ENCODE measurements at regions of chr1 and their contacts with region 1.

Region 1: DNA sequence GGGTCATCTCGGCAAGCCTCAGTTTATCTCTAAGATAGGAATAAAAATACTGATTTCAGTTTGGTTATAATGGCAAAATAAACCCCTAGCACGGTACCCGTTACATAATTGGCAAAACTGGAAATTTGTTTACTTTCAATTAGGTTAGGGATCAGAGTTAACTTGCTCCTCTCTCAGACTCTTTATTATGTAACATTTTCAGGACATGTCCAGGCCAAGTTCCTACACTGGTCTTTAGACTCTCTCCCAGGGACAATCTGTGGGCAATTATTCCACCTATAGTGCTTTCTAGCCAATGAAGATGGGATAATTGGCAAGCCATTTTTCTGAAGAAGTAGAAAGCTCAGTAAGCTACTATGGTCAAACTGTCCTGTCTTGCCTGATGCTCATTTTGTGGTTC is 189.4 kb downstream of the NEK7 start:
- DNase-seq: no peak
- H3K4me3 Mint-ChIP-seq: no peak overlapping the region
- H3K27ac Mint-ChIP-seq: no peak overlapping the region
- H3K4me1 Mint-ChIP-seq: peaks cover 22% of the 10 kb centered on the region
- H3K27me3 Mint-ChIP-seq: no peaks in the 10 kb centered on the region
- CTCF ChIP-seq: no peak

Region 2: DNA sequence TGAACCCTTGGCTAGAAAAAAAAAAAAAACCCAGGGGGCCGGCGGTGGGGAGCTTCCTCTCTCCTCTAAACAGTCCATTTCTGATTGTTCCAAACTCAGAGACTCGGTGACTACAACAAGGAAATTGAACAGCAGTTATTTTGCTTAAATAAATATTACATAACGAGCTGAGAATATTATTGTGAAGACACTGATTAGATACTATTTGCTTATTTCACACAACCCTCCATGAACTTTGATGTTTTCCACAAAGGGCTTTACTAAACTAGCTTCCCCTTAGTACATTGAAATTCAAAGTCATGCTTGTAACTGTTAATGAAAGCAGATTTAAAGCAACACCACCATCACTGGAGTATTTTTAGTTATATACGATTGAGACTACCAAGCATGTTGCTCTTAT is 1368.9 kb before region 1 on chr1 and contains the start of gene CFHR5:
- CTCF ChIA-PET with region 1: no interaction called
- POLR2A ChIA-PET with region 1: no interaction called
- intact Hi-C with region 1: no loop called
- DNase-seq: no peak
- H3K4me3 Mint-ChIP-seq: no peak within 1 kb of the TSS
- H3K27ac Mint-ChIP-seq: no peak within 1 kb of the TSS
- H3K4me1 Mint-ChIP-seq: no peaks in the 10 kb centered on the region
- H3K27me3 Mint-ChIP-seq: no peaks in the 10 kb centered on the region
- CTCF ChIP-seq: no peak
- total RNA-seq, gene CFHR5: not detected in 2 replicates

Region 3: GRCh38 chr1:198304431-198304830 is 41.7 kb before region 1 on chr1:
- CTCF ChIA-PET with region 1: no interaction called
- POLR2A ChIA-PET with region 1: no interaction called
- intact Hi-C with region 1: no loop called
- DNase-seq: no peak
- H3K4me3 Mint-ChIP-seq: no peak overlapping the region
- H3K27ac Mint-ChIP-seq: no peak overlapping the region
- H3K4me1 Mint-ChIP-seq: peaks cover 8% of the 10 kb centered on the region
- H3K27me3 Mint-ChIP-seq: no peaks in the 10 kb centered on the region
- CTCF ChIP-seq: no peak

Region 4: GRCh38 chr1:198333744-198334143 is 12.4 kb before region 1 on chr1:
- CTCF ChIA-PET with region 1: interaction called, 6 read pairs
- POLR2A ChIA-PET with region 1: interaction called, 26 read pairs
- intact Hi-C with region 1: no loop called
- DNase-seq: peak; percentile 45
- H3K4me3 Mint-ChIP-seq: no peak overlapping the region
- H3K27ac Mint-ChIP-seq: peak overlapping the region; percentile 57
- H3K4me1 Mint-ChIP-seq: peaks cover 17% of the 10 kb centered on the region
- H3K27me3 Mint-ChIP-seq: no peaks in the 10 kb centered on the region
- CTCF ChIP-seq: no peak

Region 5: GRCh38 chr1:198449727-198450433 is 103.7 kb after region 1 on chr1:
- CTCF ChIA-PET with region 1: interaction called, 3 read pairs
- POLR2A ChIA-PET with region 1: interaction called, 12 read pairs
- intact Hi-C with region 1: no loop called
- DNase-seq: peak; percentile 43
- H3K4me3 Mint-ChIP-seq: peak overlapping the region; percentile 50
- H3K27ac Mint-ChIP-seq: peak overlapping the region; percentile 53
- H3K4me1 Mint-ChIP-seq: peaks cover 22% of the 10 kb centered on the region
- H3K27me3 Mint-ChIP-seq: no peaks in the 10 kb centered on the region
- CTCF ChIP-seq: no peak

Region 6: DNA sequence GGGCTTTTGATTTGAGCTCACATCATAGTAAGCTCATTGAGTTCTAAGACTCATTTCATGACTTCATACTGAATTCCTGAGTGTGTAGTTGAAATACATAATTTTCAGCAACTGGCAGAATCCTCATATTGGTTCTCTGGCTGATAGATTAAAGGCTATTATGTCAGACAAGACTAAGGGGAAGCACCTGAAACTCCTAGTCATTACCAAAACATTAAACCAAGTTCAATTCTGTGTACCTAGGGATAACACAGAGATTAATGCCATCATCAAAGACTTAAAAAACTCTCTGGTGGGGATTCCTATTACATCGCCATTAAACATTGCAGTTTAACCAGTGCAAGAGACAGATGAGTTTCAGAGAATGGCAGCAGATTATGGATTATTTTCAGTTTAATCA is 631.7 kb after region 1 on chr1:
- CTCF ChIA-PET with region 1: no interaction called
- POLR2A ChIA-PET with region 1: no interaction called
- intact Hi-C with region 1: no loop called
- DNase-seq: no peak
- H3K4me3 Mint-ChIP-seq: no peak overlapping the region
- H3K27ac Mint-ChIP-seq: no peak overlapping the region
- H3K4me1 Mint-ChIP-seq: no peaks in the 10 kb centered on the region
- H3K27me3 Mint-ChIP-seq: no peaks in the 10 kb centered on the region
- CTCF ChIP-seq: no peak

Measured in MCF 10A (cell line).